Esophagus squamous epithelium (tissue), 5 donors: ENCODE measurements at regions of chr12 and their contacts with region 1.

Region 1: DNA sequence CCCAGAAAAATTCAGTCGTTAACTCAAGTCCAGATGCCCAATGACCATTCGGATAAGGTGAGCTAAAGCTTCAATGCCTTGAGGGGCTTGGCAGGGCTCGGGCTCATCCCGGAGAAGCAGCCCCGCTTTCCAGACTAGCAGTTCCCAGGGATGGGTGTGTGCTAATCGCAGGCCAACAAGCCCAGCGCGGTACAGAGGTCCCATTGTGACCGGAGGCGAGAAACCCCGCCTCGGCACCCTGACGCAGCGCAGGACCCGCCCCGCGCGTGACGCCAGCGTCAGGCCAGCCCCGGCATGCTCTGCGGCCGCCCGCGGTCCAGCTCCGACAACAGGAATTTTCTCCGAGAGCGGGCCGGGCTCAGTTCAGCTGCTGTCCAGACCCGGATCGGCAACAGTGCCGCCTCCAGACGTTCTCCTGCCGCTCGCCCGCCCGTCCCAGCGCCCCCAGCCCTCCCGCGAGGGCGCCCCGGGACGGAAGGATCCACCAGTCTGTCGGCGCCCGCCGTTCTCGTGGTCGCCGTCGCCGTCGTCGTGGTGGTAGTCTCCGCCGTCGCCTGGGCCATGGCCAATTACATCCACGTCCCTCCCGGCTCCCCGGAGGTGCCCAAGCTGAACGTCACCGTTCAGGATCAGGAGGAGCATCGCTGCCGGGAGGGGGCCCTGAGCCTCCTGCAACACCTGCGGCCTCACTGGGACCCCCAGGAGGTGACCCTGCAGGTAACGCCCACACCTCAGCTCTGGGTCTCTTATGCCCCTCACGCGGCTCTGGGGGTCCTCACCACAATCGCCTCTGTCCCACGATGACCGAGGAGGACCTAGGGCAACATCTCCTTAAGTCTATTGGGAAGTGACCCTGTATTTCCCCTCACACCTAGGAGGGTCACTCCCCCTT is at the start of gene ETNK1:
- DNase-seq: peak; percentile 41
- H3K4me3 ChIP-seq: peak within 1 kb of the TSS; percentile 53 to 100 (median 76)
- H3K27ac ChIP-seq: peak within 1 kb of the TSS; percentile 93 to 100 (median 98)
- H3K4me1 ChIP-seq: peaks cover 5 to 46% (median 16%) of the 10 kb centered on the region in 3 donors
- H3K27me3 ChIP-seq: no peaks in the 10 kb centered on the region
- CTCF ChIP-seq: no peak
- POLR2A ChIP-seq: peak in 3 of 4 donors; percentile 82 to 99 (median 96)
- total RNA-seq, gene ETNK1: 13.9 to 37.3 (median 28.1) TPM

Region 2: GRCh38 chr12:22544038-22544979 is 80.8 kb before region 1 on chr12 and contains the start of gene C2CD5:
- intact Hi-C with region 1: loop called (anchors 5 kb)
- DNase-seq: peak; percentile 80
- H3K4me3 ChIP-seq: peak within 1 kb of the TSS; percentile 69 to 94 (median 86)
- H3K27ac ChIP-seq: peak within 1 kb of the TSS; percentile 88 to 98 (median 94)
- H3K4me1 ChIP-seq: peaks cover 14 to 49% (median 23%) of the 10 kb centered on the region in 3 donors
- H3K27me3 ChIP-seq: no peaks in the 10 kb centered on the region
- CTCF ChIP-seq: peak in 2 of 6 experiments; percentile 16 to 47
- POLR2A ChIP-seq: peak in 3 of 4 donors; percentile 71 to 88 (median 81)
- total RNA-seq, gene C2CD5: 12.2 to 28.8 (median 24.5) TPM

Region 3: GRCh38 chr12:23014749-23015148 is 389.6 kb after region 1 on chr12:
- intact Hi-C with region 1: no loop called
- DNase-seq: no peak
- H3K4me3 ChIP-seq: no peak overlapping the region
- H3K27ac ChIP-seq: no peak overlapping the region
- H3K4me1 ChIP-seq: no peaks in the 10 kb centered on the region
- H3K27me3 ChIP-seq: no peaks in the 10 kb centered on the region
- CTCF ChIP-seq: no peak
- POLR2A ChIP-seq: no peak